CD4-positive, alpha-beta memory T cell (primary cell): ENCODE measurements at regions of chr7 and their contacts with region 1.

Region 1: GRCh38 chr7:95916573-95917297 is 144.4 kb downstream of the DYNC1I1 start:
- DNase-seq: peak; percentile 45 to 60 (median 51)
- H3K4me3 ChIP-seq: no peak overlapping the region
- H3K4me3 Mint-ChIP-seq: peak overlapping the region in 1 of 8 donors; percentile 34
- H3K27ac ChIP-seq: no peak overlapping the region
- H3K27ac Mint-ChIP-seq: no peak overlapping the region
- H3K4me1 ChIP-seq: no peaks in the 10 kb centered on the region
- H3K4me1 Mint-ChIP-seq: peaks cover 0 to 4% (median 2%) of the 10 kb centered on the region in 4 donors
- H3K27me3 ChIP-seq: no peaks in the 10 kb centered on the region
- H3K27me3 Mint-ChIP-seq: peaks cover 8 to 15% of the 10 kb centered on the region in 2 donors

Region 2: DNA sequence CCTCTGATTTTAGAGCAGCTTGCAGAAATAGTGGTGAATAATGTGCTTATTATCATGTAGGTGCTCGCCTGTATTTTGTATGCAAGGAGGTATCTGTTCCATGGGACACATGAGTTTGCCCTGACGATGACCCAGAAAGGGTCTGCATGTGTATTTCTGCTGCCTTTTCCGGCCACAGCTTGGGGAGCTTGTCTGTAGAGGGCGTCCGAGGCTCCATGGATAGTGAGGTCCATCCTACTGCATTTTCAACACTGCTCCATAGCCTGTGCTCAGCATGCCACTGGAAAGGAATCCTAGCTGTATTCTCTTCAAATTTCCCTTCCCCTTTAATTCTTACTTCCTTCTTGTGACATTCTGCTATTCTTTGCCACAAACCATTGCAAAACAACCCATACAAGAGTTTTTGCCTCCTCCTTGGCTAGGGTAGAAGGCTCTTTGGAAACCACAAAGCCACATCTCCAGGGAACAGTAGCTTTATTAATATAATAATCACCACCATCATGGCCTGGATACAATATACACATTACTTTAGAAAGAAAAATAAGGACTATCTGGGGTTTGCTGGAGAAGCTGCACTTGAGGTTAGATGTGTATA is 16.7 kb before region 1 on chr7:
- CTCF ChIA-PET with region 1: interaction called, 17 read pairs
- POLR2A ChIA-PET with region 1: interaction called, 3 read pairs
- intact Hi-C with region 1: no loop called
- DNase-seq: no peak
- H3K4me3 ChIP-seq: no peak overlapping the region
- H3K4me3 Mint-ChIP-seq: no peak overlapping the region
- H3K27ac ChIP-seq: no peak overlapping the region
- H3K27ac Mint-ChIP-seq: no peak overlapping the region
- H3K4me1 ChIP-seq: no peaks in the 10 kb centered on the region
- H3K4me1 Mint-ChIP-seq: no peaks in the 10 kb centered on the region
- H3K27me3 ChIP-seq: no peaks in the 10 kb centered on the region
- H3K27me3 Mint-ChIP-seq: peaks cover 2% of the 10 kb centered on the region in 2 donors

Region 3: DNA sequence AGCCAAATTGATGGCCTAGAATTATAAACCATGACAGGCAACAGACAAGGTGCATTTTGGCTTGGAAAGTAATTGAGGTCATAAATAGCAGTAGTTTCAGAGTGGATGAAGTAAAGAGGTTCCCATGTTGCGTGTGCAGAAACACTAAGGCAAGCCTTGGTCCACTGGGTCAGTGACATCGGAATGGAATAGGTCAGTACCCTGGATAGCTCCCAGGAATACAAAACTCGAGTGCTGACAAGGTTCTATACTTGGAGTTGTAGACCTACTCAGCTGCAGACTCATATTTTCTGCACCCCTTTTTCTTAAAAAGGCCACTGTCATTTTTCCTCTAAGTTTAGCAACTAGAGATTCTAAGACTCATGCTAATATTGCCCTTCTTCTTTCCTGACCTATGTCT is 11.6 kb before region 1 on chr7:
- CTCF ChIA-PET with region 1: interaction called, 17 read pairs
- POLR2A ChIA-PET with region 1: no interaction called
- intact Hi-C with region 1: no loop called
- DNase-seq: no peak
- H3K4me3 ChIP-seq: no peak overlapping the region
- H3K4me3 Mint-ChIP-seq: no peak overlapping the region
- H3K27ac ChIP-seq: no peak overlapping the region
- H3K27ac Mint-ChIP-seq: no peak overlapping the region
- H3K4me1 ChIP-seq: no peaks in the 10 kb centered on the region
- H3K4me1 Mint-ChIP-seq: no peaks in the 10 kb centered on the region
- H3K27me3 ChIP-seq: no peaks in the 10 kb centered on the region
- H3K27me3 Mint-ChIP-seq: peaks cover 14 to 16% of the 10 kb centered on the region in 2 donors

Region 4: GRCh38 chr7:95927756-95928155 is 11.0 kb after region 1 on chr7:
- CTCF ChIA-PET with region 1: interaction called, 44 read pairs
- POLR2A ChIA-PET with region 1: no interaction called
- intact Hi-C with region 1: no loop called
- DNase-seq: no peak
- H3K4me3 ChIP-seq: no peak overlapping the region
- H3K4me3 Mint-ChIP-seq: no peak overlapping the region
- H3K27ac ChIP-seq: no peak overlapping the region
- H3K27ac Mint-ChIP-seq: no peak overlapping the region
- H3K4me1 ChIP-seq: no peaks in the 10 kb centered on the region
- H3K4me1 Mint-ChIP-seq: no peaks in the 10 kb centered on the region
- H3K27me3 ChIP-seq: peaks cover 3% of the 10 kb centered on the region
- H3K27me3 Mint-ChIP-seq: peaks cover 7 to 8% of the 10 kb centered on the region in 2 donors

Region 5: DNA sequence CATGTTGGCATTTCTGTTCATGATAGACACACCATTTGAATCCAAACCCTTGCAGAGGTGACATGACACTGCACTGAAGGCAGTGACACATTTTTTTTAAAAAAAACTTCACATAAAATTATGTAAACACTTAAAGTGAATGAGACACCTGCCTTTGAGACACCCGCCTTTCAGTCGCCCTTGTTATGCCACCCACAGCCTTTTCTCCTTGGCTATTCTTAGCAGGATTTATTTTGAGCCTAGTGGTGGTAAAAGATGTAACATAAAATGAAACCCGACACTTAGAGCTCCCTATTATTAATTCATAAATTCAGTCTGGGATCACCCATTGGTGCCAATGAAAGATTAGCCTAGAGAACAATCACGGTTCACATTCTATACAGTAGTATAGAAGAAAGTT is 16.9 kb after region 1 on chr7:
- CTCF ChIA-PET with region 1: interaction called, 44 read pairs
- POLR2A ChIA-PET with region 1: no interaction called
- intact Hi-C with region 1: no loop called
- DNase-seq: no peak
- H3K4me3 ChIP-seq: no peak overlapping the region
- H3K4me3 Mint-ChIP-seq: no peak overlapping the region
- H3K27ac ChIP-seq: no peak overlapping the region
- H3K27ac Mint-ChIP-seq: no peak overlapping the region
- H3K4me1 ChIP-seq: no peaks in the 10 kb centered on the region
- H3K4me1 Mint-ChIP-seq: no peaks in the 10 kb centered on the region
- H3K27me3 ChIP-seq: no peaks in the 10 kb centered on the region
- H3K27me3 Mint-ChIP-seq: peaks cover 11 to 14% of the 10 kb centered on the region in 2 donors

Region 6: DNA sequence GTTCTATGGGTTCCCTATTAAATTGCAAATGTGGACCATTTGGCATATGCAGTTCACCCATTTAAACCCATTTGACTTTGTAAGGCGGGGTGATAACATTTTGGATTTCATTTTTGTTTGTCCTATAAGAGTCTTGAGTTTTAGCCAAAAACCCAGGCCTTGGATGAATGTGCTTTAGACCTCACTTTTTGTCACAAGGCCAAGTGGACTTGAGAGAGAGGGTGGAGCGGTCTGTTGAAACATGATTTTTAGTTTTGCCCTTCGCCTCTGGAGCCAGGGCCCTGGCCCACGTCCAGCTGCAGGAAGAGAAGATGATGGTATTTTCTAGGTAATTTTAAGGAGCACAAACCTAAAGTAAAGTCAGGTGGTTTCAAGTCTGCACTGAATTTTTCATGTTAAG is 145.1 kb after region 1 on chr7:
- CTCF ChIA-PET with region 1: no interaction called
- POLR2A ChIA-PET with region 1: no interaction called
- intact Hi-C with region 1: no loop called
- DNase-seq: no peak
- H3K4me3 ChIP-seq: no peak overlapping the region
- H3K4me3 Mint-ChIP-seq: no peak overlapping the region
- H3K27ac ChIP-seq: no peak overlapping the region
- H3K27ac Mint-ChIP-seq: no peak overlapping the region
- H3K4me1 ChIP-seq: no peaks in the 10 kb centered on the region
- H3K4me1 Mint-ChIP-seq: no peaks in the 10 kb centered on the region
- H3K27me3 ChIP-seq: no peaks in the 10 kb centered on the region
- H3K27me3 Mint-ChIP-seq: peaks cover 20 to 27% of the 10 kb centered on the region in 2 donors

Region 7: GRCh38 chr7:97027427-97028234 is 1110.9 kb after region 1 on chr7:
- CTCF ChIA-PET with region 1: interaction called, 61 read pairs
- POLR2A ChIA-PET with region 1: no interaction called
- intact Hi-C with region 1: no loop called
- DNase-seq: peak in 4 of 5 donors; percentile 57 to 66 (median 61)
- H3K4me3 ChIP-seq: peak overlapping the region in 1 of 2 donors; percentile 26
- H3K4me3 Mint-ChIP-seq: peak overlapping the region; percentile 77 to 88 (median 84)
- H3K27ac ChIP-seq: no peak overlapping the region
- H3K27ac Mint-ChIP-seq: peak overlapping the region in 2 of 7 donors; percentile 42 to 53
- H3K4me1 ChIP-seq: peaks cover 17% of the 10 kb centered on the region
- H3K4me1 Mint-ChIP-seq: peaks cover 28 to 43% (median 36%) of the 10 kb centered on the region in 4 donors
- H3K27me3 ChIP-seq: peaks cover 43% of the 10 kb centered on the region
- H3K27me3 Mint-ChIP-seq: peaks cover 51 to 64% of the 10 kb centered on the region in 2 donors

Region 8: DNA sequence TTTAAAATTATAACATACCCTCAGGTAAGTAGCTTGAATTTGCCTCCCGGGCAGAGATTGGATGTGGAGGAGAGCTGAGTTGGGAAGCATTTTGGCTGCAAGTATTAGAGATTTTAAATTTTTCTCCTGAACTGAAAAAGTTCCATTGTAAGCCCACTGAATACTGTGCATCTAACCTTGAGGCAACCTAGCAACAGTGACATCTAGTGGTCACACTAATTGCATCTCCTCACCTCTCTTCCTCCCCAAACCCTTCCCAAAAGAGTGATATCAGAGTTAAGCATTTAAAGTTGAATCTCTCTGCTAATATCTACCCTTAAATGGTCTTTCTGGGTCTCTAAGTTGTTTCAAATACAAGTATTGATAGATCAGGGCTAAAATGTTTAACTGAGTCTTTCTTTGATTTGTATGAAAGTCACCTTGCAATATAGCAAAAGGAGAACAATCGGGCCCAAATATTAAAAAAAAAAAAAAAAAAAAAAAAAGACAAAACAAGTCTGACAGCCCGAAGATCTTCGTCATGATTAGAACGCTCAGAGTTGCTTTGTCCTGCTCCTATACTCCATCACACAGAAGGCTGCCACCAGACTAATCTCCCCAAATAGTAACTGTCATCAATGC is 1148.3 kb after region 1 on chr7:
- CTCF ChIA-PET with region 1: interaction called, 39 read pairs
- POLR2A ChIA-PET with region 1: no interaction called
- intact Hi-C with region 1: loop called (anchors 1 kb)
- DNase-seq: peak in 4 of 5 donors; percentile 20 to 38 (median 28)
- H3K4me3 ChIP-seq: no peak overlapping the region
- H3K4me3 Mint-ChIP-seq: no peak overlapping the region
- H3K27ac ChIP-seq: no peak overlapping the region
- H3K27ac Mint-ChIP-seq: no peak overlapping the region
- H3K4me1 ChIP-seq: no peaks in the 10 kb centered on the region
- H3K4me1 Mint-ChIP-seq: no peaks in the 10 kb centered on the region
- H3K27me3 ChIP-seq: no peaks in the 10 kb centered on the region
- H3K27me3 Mint-ChIP-seq: peaks cover 1 to 2% of the 10 kb centered on the region in 2 donors